ENCODE measurements at regions of chr12 and their contacts with region 1.

Region 1: GRCh38 chr12:50174971-50175715 is 8.0 kb upstream of the CERS5 start:
- DNase-seq: peak in 1 of 2 donors; percentile 84
- ATAC-seq: peak; percentile 53 to 64 (median 53)
- H3K4me3 ChIP-seq: no peak overlapping the region
- H3K4me3 Mint-ChIP-seq: no peak overlapping the region
- H3K27ac ChIP-seq: no peak overlapping the region
- H3K27ac Mint-ChIP-seq: no peak overlapping the region
- H3K4me1 ChIP-seq: no peaks in the 10 kb centered on the region
- H3K4me1 Mint-ChIP-seq: no peaks in the 10 kb centered on the region
- H3K27me3 ChIP-seq: no peaks in the 10 kb centered on the region
- H3K27me3 Mint-ChIP-seq: no peaks in the 10 kb centered on the region
- CTCF ChIP-seq: peak; percentile 80

Region 2: DNA sequence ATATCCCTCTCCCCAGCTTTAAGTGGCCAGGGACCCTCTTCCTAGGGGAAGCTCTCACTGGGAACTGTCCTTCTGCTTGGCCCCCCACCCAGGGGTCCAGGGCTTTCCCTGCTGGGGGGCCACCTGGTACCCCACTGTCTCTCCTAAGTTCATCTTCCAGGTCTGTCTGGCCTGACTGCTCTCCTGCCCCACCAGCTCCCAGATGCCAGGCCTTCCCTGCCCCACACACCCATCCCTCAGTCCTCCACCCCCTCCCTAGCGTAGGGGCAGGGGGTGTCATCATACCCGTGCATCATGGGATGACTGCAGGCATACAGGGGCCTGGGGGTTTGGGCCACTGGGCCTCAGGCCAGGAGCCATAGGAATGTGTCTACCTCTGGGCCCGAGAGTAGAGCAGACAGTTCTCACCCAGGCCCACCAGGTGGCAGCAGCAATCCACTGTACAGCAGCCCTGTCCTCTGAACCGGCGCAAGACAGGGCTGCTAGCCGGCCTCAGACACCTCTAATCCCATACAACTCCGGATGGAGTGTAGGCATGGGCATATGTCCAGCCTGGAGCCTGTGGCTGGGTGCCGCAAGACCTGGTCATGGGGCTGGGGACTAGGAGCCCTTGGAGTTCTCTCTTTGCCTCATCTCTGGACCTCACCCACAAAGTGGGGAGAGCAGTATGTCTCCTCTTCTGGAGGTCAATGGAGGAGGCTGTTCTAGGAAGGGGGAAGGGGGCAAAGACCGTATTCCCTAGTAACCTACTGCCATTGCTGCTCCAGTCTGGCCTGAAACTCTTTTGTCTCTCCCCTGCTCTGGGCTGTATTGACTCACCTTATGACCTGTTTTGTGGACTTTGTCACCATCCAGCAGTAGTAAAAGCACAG is 100.0 kb before region 1 on chr12:
- intact Hi-C with region 1: loop called (anchors 1 kb)
- DNase-seq: peak; percentile 77 to 89
- ATAC-seq: peak; percentile 88 to 99 (median 96)
- H3K4me3 ChIP-seq: no peak overlapping the region
- H3K4me3 Mint-ChIP-seq: no peak overlapping the region
- H3K27ac ChIP-seq: no peak overlapping the region
- H3K27ac Mint-ChIP-seq: peak overlapping the region in 1 of 2 donors; percentile 52
- H3K4me1 ChIP-seq: peaks cover 9% of the 10 kb centered on the region
- H3K4me1 Mint-ChIP-seq: peaks cover 0 to 9% of the 10 kb centered on the region in 2 donors
- H3K27me3 ChIP-seq: no peaks in the 10 kb centered on the region
- H3K27me3 Mint-ChIP-seq: peaks cover 0 to 8% of the 10 kb centered on the region in 2 donors
- CTCF ChIP-seq: peak; percentile 92

Region 3: GRCh38 chr12:50132505-50133135 is 42.5 kb before region 1 on chr12:
- intact Hi-C with region 1: loop called (anchors 1 kb)
- DNase-seq: peak in 1 of 2 donors; percentile 59
- ATAC-seq: peak in 1 of 3 donors; percentile 70
- H3K4me3 ChIP-seq: no peak overlapping the region
- H3K4me3 Mint-ChIP-seq: no peak overlapping the region
- H3K27ac ChIP-seq: no peak overlapping the region
- H3K27ac Mint-ChIP-seq: peak overlapping the region; percentile 63 to 74
- H3K4me1 ChIP-seq: no peaks in the 10 kb centered on the region
- H3K4me1 Mint-ChIP-seq: peaks cover 5 to 9% of the 10 kb centered on the region in 2 donors
- H3K27me3 ChIP-seq: no peaks in the 10 kb centered on the region
- H3K27me3 Mint-ChIP-seq: no peaks in the 10 kb centered on the region
- CTCF ChIP-seq: peak; percentile 68

Region 4: GRCh38 chr12:50151047-50151687 is 24.0 kb before region 1 on chr12:
- intact Hi-C with region 1: no loop called
- DNase-seq: no peak
- ATAC-seq: no peak
- H3K4me3 ChIP-seq: no peak overlapping the region
- H3K4me3 Mint-ChIP-seq: no peak overlapping the region
- H3K27ac ChIP-seq: no peak overlapping the region
- H3K27ac Mint-ChIP-seq: peak overlapping the region in 1 of 2 donors; percentile 51
- H3K4me1 ChIP-seq: no peaks in the 10 kb centered on the region
- H3K4me1 Mint-ChIP-seq: peaks cover 7 to 21% of the 10 kb centered on the region in 2 donors
- H3K27me3 ChIP-seq: no peaks in the 10 kb centered on the region
- H3K27me3 Mint-ChIP-seq: no peaks in the 10 kb centered on the region
- CTCF ChIP-seq: no peak

Measured in natural killer cell (primary cell).